ENCODE measurements at regions of chr13 and their contacts with region 1.

Region 1: DNA sequence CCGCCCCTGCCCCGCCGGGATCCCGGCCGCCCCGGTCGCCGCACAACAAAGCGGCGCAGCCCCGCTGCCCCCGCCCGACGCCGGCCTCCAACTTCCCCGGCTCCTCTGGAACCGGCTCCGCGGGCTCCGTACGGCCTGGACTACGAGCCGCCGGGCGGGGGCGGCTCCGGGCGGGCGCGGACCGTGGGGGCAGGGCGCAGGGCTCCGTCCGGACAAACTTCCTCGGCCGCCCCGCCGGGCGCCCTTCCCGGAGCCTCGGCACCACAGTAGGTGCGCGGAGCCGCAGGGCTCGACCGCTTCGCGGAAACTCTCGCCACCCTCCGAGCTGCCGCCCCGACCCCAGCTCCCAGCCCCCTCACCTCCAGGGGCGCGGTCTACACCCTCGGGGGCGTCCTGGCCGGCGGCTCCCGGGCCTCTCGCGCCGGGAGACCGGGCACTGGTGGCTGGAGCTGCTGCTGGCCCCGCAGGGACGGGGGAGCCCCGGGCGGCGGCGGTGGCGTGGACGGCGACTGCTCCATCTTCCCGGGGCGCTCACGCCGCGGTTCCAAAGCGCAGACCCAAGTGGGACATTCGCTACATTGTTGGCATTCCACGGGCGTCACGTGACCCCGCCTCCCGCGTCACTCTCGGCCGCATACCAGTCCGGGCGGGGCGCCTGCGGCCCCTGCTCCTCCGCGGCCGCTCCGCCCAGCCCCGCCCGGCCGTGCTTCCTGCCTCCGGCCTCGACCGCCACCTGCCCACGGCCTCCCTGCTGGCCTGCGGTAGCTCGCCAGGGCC is at the start of gene LATS2:
- DNase-seq: peak; percentile 93
- H3K4me3 ChIP-seq: peak within 1 kb of the TSS; percentile 93 to 99 (median 97)
- H3K27ac ChIP-seq: peak within 1 kb of the TSS; percentile 94
- H3K4me1 ChIP-seq: peaks cover 36% of the 10 kb centered on the region
- H3K27me3 ChIP-seq: no peaks in the 10 kb centered on the region
- CTCF ChIP-seq: no peak
- POLR2A ChIP-seq: peak; percentile 90
- total RNA-seq, gene LATS2: 65.7 and 67.6 TPM in 2 replicates

Region 2: DNA sequence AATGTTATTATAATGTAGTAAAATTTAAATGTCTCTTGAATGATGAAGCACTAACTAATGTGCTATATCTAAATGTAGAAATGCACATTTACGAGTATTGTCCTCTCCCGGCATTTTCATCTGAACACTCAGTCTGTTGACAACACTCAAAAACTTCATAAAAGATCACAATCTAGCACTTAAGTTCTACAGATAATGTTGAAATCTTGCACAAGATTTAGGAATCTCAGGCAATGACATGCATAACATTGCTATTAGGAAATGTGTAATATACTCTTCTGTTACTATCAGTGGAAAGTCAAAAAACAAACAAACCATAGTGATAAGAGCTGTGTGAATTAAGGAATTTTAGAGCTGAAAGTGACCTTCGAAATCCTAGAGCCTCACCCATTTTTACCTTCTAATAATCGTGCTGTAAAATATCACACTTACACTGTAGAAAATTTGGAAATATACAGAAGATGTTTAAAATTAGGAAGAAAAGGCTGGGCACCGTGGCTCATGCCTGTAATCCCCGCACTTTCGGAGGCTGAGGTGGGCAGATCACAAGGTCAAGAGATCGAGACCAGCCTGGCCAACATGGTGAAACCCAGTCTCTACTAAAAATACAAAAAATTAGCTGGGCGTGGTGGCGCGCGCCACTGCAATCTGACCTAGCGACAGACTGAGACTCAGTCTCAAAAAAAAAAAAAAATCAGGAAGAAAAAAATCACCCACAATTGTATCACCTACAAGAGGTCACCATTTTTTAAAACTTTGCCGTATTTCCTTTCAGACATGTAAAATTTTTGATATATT is 120.9 kb before region 1 on chr13:
- CTCF ChIA-PET with region 1: interaction called, 9 read pairs
- POLR2A ChIA-PET with region 1: interaction called, 3 read pairs
- dilution Hi-C with region 1: no loop called
- intact Hi-C with region 1: loop called (anchors 1 kb)
- DNase-seq: no peak
- H3K4me3 ChIP-seq: no peak overlapping the region
- H3K27ac ChIP-seq: no peak overlapping the region
- H3K4me1 ChIP-seq: no peaks in the 10 kb centered on the region
- H3K27me3 ChIP-seq: no peaks in the 10 kb centered on the region
- CTCF ChIP-seq: no peak
- POLR2A ChIP-seq: no peak

Region 3: GRCh38 chr13:20997430-20998161 is 63.6 kb before region 1 on chr13:
- CTCF ChIA-PET with region 1: interaction called, 3 read pairs
- POLR2A ChIA-PET with region 1: no interaction called
- dilution Hi-C with region 1: no loop called
- intact Hi-C with region 1: loop called (anchors 5 kb)
- DNase-seq: peak; percentile 65
- H3K4me3 ChIP-seq: no peak overlapping the region
- H3K27ac ChIP-seq: peak overlapping the region; percentile 46
- H3K4me1 ChIP-seq: peaks cover 16% of the 10 kb centered on the region
- H3K27me3 ChIP-seq: no peaks in the 10 kb centered on the region
- CTCF ChIP-seq: no peak
- POLR2A ChIP-seq: no peak

Region 4: DNA sequence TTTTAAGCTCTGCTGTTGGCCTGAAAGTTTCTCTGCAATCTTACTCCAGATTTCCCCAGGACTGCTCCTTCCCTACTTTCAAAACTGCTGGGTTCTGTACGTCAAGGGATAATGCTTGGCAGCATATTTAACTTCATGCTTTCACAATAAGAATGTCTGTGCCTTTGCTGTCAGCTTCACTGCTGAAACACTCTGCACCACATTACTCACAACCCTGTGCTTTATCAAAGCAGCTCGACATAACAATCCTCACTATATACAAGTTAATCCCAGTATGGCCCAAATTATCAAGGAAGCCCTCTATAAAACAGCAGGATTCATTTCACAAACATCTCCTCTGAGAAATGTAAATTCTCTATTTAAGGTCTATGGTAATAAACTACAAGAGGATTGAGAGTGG is 17.3 kb before region 1 on chr13:
- CTCF ChIA-PET with region 1: interaction called, 7 read pairs
- POLR2A ChIA-PET with region 1: interaction called, 3 read pairs
- dilution Hi-C with region 1: no loop called
- intact Hi-C with region 1: loop called (anchors 1 kb)
- DNase-seq: no peak
- H3K4me3 ChIP-seq: no peak overlapping the region
- H3K27ac ChIP-seq: no peak overlapping the region
- H3K4me1 ChIP-seq: peaks cover 74% of the 10 kb centered on the region
- H3K27me3 ChIP-seq: no peaks in the 10 kb centered on the region
- CTCF ChIP-seq: no peak
- POLR2A ChIP-seq: no peak

Region 5: GRCh38 chr13:21111546-21111945 is 50.4 kb after region 1 on chr13:
- CTCF ChIA-PET with region 1: no interaction called
- POLR2A ChIA-PET with region 1: interaction called, 3 read pairs
- dilution Hi-C with region 1: no loop called
- intact Hi-C with region 1: loop called (anchors 2 kb)
- DNase-seq: no peak
- H3K4me3 ChIP-seq: no peak overlapping the region
- H3K27ac ChIP-seq: no peak overlapping the region
- H3K4me1 ChIP-seq: no peaks in the 10 kb centered on the region
- H3K27me3 ChIP-seq: no peaks in the 10 kb centered on the region
- CTCF ChIP-seq: no peak
- POLR2A ChIP-seq: no peak

Region 6: GRCh38 chr13:21557995-21558394 is 496.8 kb after region 1 on chr13:
- CTCF ChIA-PET with region 1: no interaction called
- POLR2A ChIA-PET with region 1: no interaction called
- dilution Hi-C with region 1: no loop called
- intact Hi-C with region 1: no loop called
- DNase-seq: peak; percentile 7
- H3K4me3 ChIP-seq: no peak overlapping the region
- H3K27ac ChIP-seq: no peak overlapping the region
- H3K4me1 ChIP-seq: no peaks in the 10 kb centered on the region
- H3K27me3 ChIP-seq: no peaks in the 10 kb centered on the region
- CTCF ChIP-seq: peak; percentile 36 to 54
- POLR2A ChIP-seq: no peak

Region 7: GRCh38 chr13:21872795-21873194 is 811.6 kb after region 1 on chr13:
- CTCF ChIA-PET with region 1: no interaction called
- POLR2A ChIA-PET with region 1: no interaction called
- dilution Hi-C with region 1: no loop called
- intact Hi-C with region 1: no loop called
- DNase-seq: no peak
- H3K4me3 ChIP-seq: no peak overlapping the region
- H3K27ac ChIP-seq: no peak overlapping the region
- H3K4me1 ChIP-seq: no peaks in the 10 kb centered on the region
- H3K27me3 ChIP-seq: no peaks in the 10 kb centered on the region
- CTCF ChIP-seq: no peak
- POLR2A ChIP-seq: no peak

Measured in endothelial cell of umbilical vein (primary cell).